H1 (cell line): ENCODE measurements at regions of chr5 and their contacts with region 1.

Region 1: GRCh38 chr5:154940772-154941620 is at the start of gene MRPL22:
- DNase-seq: peak; percentile 81 to 93
- H3K4me3 ChIP-seq: peak within 1 kb of the TSS; percentile 90 to 99 (median 96)
- H3K27ac ChIP-seq: peak within 1 kb of the TSS; percentile 62
- H3K4me1 ChIP-seq: peaks cover 0 to 9% (median 6%) of the 10 kb centered on the region in 4 experiments; a peak in 6 of 7 replicates
- H3K27me3 ChIP-seq: no peaks in the 10 kb centered on the region
- CTCF ChIP-seq: no peak
- EP300 ChIP-seq: no peak
- POLR2A ChIP-seq: peak; percentile 64 to 92
- RAD21 ChIP-seq: no peak
- total RNA-seq, gene MRPL22: 65.6 and 71.2 TPM in 2 replicates

Region 2: GRCh38 chr5:154878642-154879335 is 62.2 kb before region 1 on chr5:
- CTCF ChIA-PET with region 1: no interaction called
- POLR2A ChIA-PET with region 1: no interaction called
- DNase-seq: no peak
- H3K4me3 ChIP-seq: no peak overlapping the region
- H3K27ac ChIP-seq: no peak overlapping the region
- H3K4me1 ChIP-seq: no peaks in the 10 kb centered on the region
- H3K27me3 ChIP-seq: no peaks in the 10 kb centered on the region
- CTCF ChIP-seq: no peak
- EP300 ChIP-seq: no peak
- POLR2A ChIP-seq: no peak
- RAD21 ChIP-seq: no peak

Region 3: DNA sequence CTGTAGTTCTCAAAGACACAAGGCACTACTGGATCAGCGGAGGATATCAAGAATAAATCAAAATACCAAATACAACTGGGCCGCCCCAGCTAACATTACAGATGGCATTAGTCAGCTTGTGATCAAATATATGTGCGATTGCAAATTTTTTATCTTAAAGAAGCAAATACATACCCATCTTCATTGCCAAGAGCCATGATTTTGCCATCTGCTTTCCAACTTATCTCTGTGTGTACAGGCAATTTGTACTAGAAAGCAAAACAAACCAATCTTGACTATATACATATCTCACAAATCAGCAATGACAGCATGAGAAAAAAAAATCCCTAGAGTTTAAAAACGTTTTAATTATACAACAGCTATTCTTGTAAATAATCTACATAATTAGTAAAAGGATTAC is 23.2 kb before region 1 on chr5:
- CTCF ChIA-PET with region 1: interaction called, 6 read pairs
- POLR2A ChIA-PET with region 1: interaction called, 10 read pairs
- DNase-seq: no peak
- H3K4me3 ChIP-seq: no peak overlapping the region
- H3K27ac ChIP-seq: no peak overlapping the region
- H3K4me1 ChIP-seq: no peaks in the 10 kb centered on the region
- H3K27me3 ChIP-seq: no peaks in the 10 kb centered on the region
- CTCF ChIP-seq: no peak
- EP300 ChIP-seq: no peak
- POLR2A ChIP-seq: no peak
- RAD21 ChIP-seq: no peak

Region 4: GRCh38 chr5:154962494-154962893 is 21.5 kb after region 1 on chr5:
- CTCF ChIA-PET with region 1: interaction called, 40 read pairs
- POLR2A ChIA-PET with region 1: no interaction called
- DNase-seq: no peak
- H3K4me3 ChIP-seq: no peak overlapping the region
- H3K27ac ChIP-seq: no peak overlapping the region
- H3K4me1 ChIP-seq: no peaks in the 10 kb centered on the region
- H3K27me3 ChIP-seq: no peaks in the 10 kb centered on the region
- CTCF ChIP-seq: no peak
- EP300 ChIP-seq: no peak
- POLR2A ChIP-seq: no peak
- RAD21 ChIP-seq: no peak

Region 5: DNA sequence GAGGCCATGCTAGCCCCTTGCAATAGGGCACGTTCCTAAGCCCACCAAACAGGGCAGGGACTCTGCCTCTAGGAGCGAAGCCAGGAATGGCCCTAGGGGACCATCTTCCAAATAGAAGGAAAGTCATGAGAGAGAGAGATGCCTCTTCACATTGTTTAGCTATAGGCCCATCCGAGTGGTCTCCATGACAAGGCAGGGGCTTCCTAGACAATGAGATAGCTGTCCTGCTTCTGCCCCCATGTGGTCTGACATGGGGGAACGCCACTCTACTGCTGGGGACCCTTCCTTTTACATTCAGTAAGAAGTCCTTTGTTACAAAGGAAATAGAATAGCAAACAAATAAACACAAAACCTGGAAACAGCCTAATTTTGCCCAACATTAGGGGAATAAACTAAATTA is 54.7 kb after region 1 on chr5:
- CTCF ChIA-PET with region 1: interaction called, 19 read pairs
- POLR2A ChIA-PET with region 1: no interaction called
- DNase-seq: peak in 1 of 2 experiments; percentile 55
- H3K4me3 ChIP-seq: no peak overlapping the region
- H3K27ac ChIP-seq: no peak overlapping the region
- H3K4me1 ChIP-seq: no peaks in the 10 kb centered on the region; a peak in 1 of 7 replicates
- H3K27me3 ChIP-seq: no peaks in the 10 kb centered on the region
- CTCF ChIP-seq: peak; percentile 58 to 69 (median 65)
- EP300 ChIP-seq: no peak
- POLR2A ChIP-seq: no peak
- RAD21 ChIP-seq: peak; percentile 72 to 75

Region 6: GRCh38 chr5:155027993-155028629 is 87.1 kb after region 1 on chr5:
- CTCF ChIA-PET with region 1: interaction called, 13 read pairs
- POLR2A ChIA-PET with region 1: interaction called, 3 read pairs
- DNase-seq: no peak
- H3K4me3 ChIP-seq: no peak overlapping the region
- H3K27ac ChIP-seq: no peak overlapping the region
- H3K4me1 ChIP-seq: peaks cover 0 to 2% (median 0%) of the 10 kb centered on the region in 4 experiments; a peak in 2 of 7 replicates
- H3K27me3 ChIP-seq: no peaks in the 10 kb centered on the region
- CTCF ChIP-seq: peak in 2 of 3 experiments; percentile 62 to 74; a peak in 3 of 4 replicates
- EP300 ChIP-seq: no peak
- POLR2A ChIP-seq: no peak
- RAD21 ChIP-seq: peak; percentile 84 to 88